Panc1 (cell line): ENCODE measurements at regions of chr19 and their contacts with region 1.

Region 1: GRCh38 chr19:5790573-5791520 is at the start of gene DUS3L:
- DNase-seq: peak; percentile 87
- ATAC-seq: peak; percentile 96
- H3K4me3 ChIP-seq: peak within 1 kb of the TSS; percentile 68 to 76
- H3K27ac ChIP-seq: peak within 1 kb of the TSS; percentile 90
- H3K4me1 ChIP-seq: no peaks in the 10 kb centered on the region
- H3K27me3 ChIP-seq: no peaks in the 10 kb centered on the region
- CTCF ChIP-seq: no peak
- total RNA-seq, gene DUS3L: 39.6 TPM

Region 2: GRCh38 chr19:5690125-5690954 is 100.5 kb before region 1 on chr19 and contains the start of gene RPL36:
- CTCF ChIA-PET with region 1: interaction called, 5 read pairs
- POLR2A ChIA-PET with region 1: interaction called, 7 read pairs
- in situ Hi-C with region 1: no loop called
- intact Hi-C with region 1: loop called (anchors 10 kb)
- DNase-seq: peak; percentile 83
- ATAC-seq: peak; percentile 62
- H3K4me3 ChIP-seq: peak within 1 kb of the TSS; percentile 82 to 89
- H3K27ac ChIP-seq: peak within 1 kb of the TSS; percentile 90
- H3K4me1 ChIP-seq: peaks cover 12% of the 10 kb centered on the region
- H3K27me3 ChIP-seq: no peaks in the 10 kb centered on the region
- CTCF ChIP-seq: peak; percentile 92
- total RNA-seq, gene RPL36: 465 TPM

Region 3: DNA sequence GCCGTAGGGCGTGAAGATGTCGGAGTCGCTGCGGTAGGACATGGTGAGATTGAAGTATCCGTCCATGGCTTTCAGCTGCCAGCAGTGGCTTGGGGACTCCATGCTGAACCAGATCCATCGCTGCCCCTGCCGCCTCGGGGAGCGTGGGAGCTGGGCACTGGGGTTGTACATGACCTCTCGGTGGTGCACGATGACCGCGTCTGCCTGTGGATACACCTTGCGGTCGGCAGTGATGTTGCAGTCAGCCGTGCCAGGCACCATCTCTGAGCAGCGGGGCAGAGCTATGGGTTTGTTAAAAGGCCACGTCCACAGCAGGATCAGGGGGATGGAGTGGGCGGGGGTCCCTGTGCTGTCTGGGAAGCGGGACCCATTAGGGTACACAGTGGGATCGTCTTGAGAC is 41.2 kb after region 1 on chr19:
- CTCF ChIA-PET with region 1: no interaction called
- POLR2A ChIA-PET with region 1: no interaction called
- in situ Hi-C with region 1: no loop called
- intact Hi-C with region 1: no loop called
- DNase-seq: no peak
- ATAC-seq: no peak
- H3K4me3 ChIP-seq: no peak overlapping the region
- H3K27ac ChIP-seq: no peak overlapping the region
- H3K4me1 ChIP-seq: peaks cover 1% of the 10 kb centered on the region; the same call in 1 of the 2 replicates
- H3K27me3 ChIP-seq: no peaks in the 10 kb centered on the region
- CTCF ChIP-seq: no peak

Region 4: GRCh38 chr19:5844456-5845433 is 53.9 kb after region 1 on chr19:
- CTCF ChIA-PET with region 1: no interaction called
- POLR2A ChIA-PET with region 1: no interaction called
- in situ Hi-C with region 1: no loop called
- intact Hi-C with region 1: no loop called
- DNase-seq: no peak
- ATAC-seq: no peak
- H3K4me3 ChIP-seq: no peak overlapping the region
- H3K27ac ChIP-seq: no peak overlapping the region
- H3K4me1 ChIP-seq: no peaks in the 10 kb centered on the region
- H3K27me3 ChIP-seq: no peaks in the 10 kb centered on the region
- CTCF ChIP-seq: no peak

Region 5: DNA sequence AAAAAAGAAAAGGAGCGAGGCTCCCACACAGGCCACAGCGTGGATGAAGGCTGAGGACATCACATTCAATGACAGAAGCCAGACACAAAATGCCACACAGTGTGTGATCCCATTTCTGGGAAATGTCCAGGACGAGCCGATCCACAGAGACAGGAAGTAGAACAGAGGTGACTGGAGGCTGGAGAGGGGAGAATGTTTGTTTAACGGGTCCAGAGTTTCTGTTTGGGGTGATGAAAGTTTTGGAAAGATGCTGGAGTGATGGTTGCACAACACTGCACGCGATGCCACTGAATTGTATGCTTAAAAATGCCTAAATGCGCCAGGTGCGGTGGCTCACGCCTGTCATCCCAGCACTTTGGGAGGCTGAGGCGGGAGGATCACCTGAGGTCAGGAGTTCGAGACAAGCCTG is 80.1 kb after region 1 on chr19:
- CTCF ChIA-PET with region 1: no interaction called
- POLR2A ChIA-PET with region 1: no interaction called
- in situ Hi-C with region 1: no loop called
- intact Hi-C with region 1: no loop called
- DNase-seq: no peak
- ATAC-seq: no peak
- H3K4me3 ChIP-seq: no peak overlapping the region
- H3K27ac ChIP-seq: no peak overlapping the region
- H3K4me1 ChIP-seq: no peaks in the 10 kb centered on the region
- H3K27me3 ChIP-seq: no peaks in the 10 kb centered on the region
- CTCF ChIP-seq: no peak